A549 (cell line): ENCODE measurements at regions of chr10 and their contacts with region 1.

Region 1: DNA sequence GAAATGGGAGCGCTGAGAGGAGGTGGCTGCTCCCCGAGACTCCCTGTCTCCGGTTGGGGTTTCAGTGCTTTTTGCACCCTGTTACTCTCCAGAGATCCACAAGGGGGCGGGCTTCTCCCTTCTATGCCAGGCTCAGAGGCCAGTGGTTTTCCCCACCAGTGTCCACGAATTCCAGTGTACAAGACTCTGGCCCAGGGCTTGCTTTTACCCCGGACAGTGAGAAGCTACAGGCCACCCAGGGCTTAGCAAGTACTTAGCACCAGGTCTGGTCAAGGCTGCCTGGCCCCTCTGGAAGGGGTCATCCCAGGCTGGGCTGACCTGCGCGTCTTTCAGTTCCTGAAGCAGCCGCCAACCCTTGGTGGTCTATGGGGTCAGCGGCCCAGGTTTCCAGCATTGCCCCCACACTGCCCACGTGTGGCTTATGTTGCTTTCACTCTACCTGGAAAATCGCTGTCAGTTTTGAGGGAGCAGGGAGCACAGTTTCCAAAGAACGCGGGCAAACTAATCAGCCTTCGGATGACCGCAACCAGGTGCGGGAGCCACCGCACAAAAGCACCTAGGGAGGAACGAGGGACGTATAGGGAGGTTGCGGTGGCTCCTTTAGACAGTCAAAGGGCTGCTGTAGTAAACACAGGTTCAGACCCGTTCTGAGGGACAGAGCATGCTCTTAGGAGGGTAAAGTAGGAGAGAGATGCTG is 6.8 kb downstream of the CYP26A1 start:
- DNase-seq: peak; percentile 66 to 87
- ATAC-seq: peak; percentile 81 to 84
- H3K4me3 ChIP-seq: no peak overlapping the region
- H3K27ac ChIP-seq: peak overlapping the region; percentile 51 to 81
- H3K4me1 ChIP-seq: peaks cover 26% of the 10 kb centered on the region; the same call in 2 of the 3 replicates
- CTCF ChIP-seq: peak; percentile 91
- EP300 ChIP-seq: no peak
- POLR2A ChIP-seq: no peak
- RAD21 ChIP-seq: peak; percentile 92 to 93

Region 2: DNA sequence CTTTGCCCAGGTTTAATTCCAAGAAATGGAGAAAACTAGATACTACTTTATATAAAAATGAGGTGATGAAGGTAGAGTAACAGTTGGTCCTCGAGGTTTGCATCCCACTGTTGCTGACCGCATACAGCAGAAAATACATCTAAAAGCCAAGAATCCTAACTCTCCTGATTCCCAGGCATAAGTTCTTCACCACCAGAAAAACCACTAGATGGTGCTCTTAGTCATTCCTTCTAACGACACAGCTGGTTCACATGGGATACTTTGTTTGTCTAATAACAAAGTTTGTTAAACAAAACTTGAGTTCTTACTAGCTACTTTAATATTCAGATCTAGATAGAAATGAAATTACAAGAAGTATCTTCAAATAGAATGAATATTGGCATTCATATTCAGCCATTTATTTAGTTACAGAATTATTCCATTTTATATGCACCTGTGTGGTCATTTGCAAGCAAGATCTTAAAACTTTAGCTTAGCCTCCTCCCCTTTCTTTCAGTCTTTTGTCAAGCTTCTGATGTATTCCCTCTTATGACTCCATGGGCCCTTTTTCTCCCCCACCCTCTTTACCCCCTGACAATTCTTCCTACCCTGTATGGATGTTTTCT is 74.0 kb before region 1 on chr10:
- CTCF ChIA-PET with region 1: interaction called, 85 read pairs
- POLR2A ChIA-PET with region 1: no interaction called
- DNase-seq: peak; percentile 13 to 60
- ATAC-seq: peak; percentile 93 to 95
- H3K4me3 ChIP-seq: no peak overlapping the region
- H3K27ac ChIP-seq: no peak overlapping the region
- H3K4me1 ChIP-seq: peaks cover 19% of the 10 kb centered on the region
- CTCF ChIP-seq: peak; percentile 87
- EP300 ChIP-seq: no peak
- POLR2A ChIP-seq: no peak
- RAD21 ChIP-seq: peak; percentile 82 to 86

Region 3: DNA sequence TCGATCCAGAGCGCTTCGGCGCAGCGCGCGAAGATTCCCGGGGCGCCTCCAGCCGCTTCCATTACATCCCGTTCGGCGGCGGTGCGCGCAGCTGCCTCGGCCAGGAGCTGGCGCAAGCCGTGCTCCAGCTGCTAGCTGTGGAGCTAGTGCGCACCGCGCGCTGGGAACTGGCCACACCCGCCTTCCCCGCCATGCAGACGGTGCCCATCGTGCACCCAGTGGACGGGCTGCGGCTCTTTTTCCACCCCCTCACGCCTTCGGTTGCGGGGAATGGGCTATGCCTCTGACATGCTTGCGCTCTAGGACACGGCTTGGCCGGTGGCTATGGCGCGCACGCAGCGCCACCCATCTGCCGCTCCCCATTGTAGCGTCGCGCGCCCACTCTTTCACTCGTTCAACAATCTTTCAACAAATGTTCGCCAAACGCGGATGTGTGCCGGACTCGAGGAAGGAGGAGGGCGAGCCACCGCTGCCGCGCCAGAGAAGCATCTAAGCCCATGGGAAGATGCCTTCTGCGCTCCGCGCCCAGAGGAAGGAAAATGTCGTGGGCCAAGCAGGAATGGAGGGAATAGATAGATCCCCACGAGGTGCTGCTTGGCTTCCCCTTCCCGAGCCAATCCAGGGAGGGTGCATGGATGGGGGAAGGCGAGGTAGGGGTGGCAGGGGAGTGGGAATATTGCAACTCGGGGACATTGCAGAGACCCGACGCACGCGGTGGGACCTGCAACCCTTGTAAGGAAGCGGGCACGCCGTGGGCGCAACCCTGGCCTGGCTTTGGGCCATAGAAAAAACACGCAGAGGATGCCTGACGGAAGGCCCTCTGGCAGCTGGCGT is 11.9 kb before region 1 on chr10:
- CTCF ChIA-PET with region 1: interaction called, 16 read pairs
- POLR2A ChIA-PET with region 1: no interaction called
- DNase-seq: peak in 1 of 2 experiments; percentile 57
- ATAC-seq: peak; percentile 48 to 60; a peak in 5 of 6 replicates
- H3K4me3 ChIP-seq: peak overlapping the region; percentile 42
- H3K27ac ChIP-seq: peak overlapping the region in 1 of 2 experiments; percentile 37; a peak in 1 of 6 replicates
- H3K4me1 ChIP-seq: 0 out of 3 replicates have a peak, but pooled peaks cover 9% of the 10 kb centered on the region
- CTCF ChIP-seq: peak; percentile 36; the same call in 2 of the 3 replicates
- EP300 ChIP-seq: no peak
- POLR2A ChIP-seq: no peak
- RAD21 ChIP-seq: peak; percentile 39 to 47; a peak in 3 of 5 replicates

Region 4: GRCh38 chr10:93115661-93116383 is 35.3 kb after region 1 on chr10:
- CTCF ChIA-PET with region 1: interaction called, 15 read pairs
- POLR2A ChIA-PET with region 1: no interaction called
- DNase-seq: peak; percentile 39 to 65
- ATAC-seq: peak; percentile 56 to 76; a peak in 3 of 6 replicates
- H3K4me3 ChIP-seq: no peak overlapping the region
- H3K27ac ChIP-seq: 0 out of 6 replicates have a peak overlapping the region, but pooled peaks of 1 of the 2 experiments have one; percentile 29
- H3K4me1 ChIP-seq: no peaks in the 10 kb centered on the region
- CTCF ChIP-seq: no peak
- EP300 ChIP-seq: no peak
- POLR2A ChIP-seq: no peak
- RAD21 ChIP-seq: peak; percentile 39 to 54; a peak in 3 of 5 replicates

Region 5: DNA sequence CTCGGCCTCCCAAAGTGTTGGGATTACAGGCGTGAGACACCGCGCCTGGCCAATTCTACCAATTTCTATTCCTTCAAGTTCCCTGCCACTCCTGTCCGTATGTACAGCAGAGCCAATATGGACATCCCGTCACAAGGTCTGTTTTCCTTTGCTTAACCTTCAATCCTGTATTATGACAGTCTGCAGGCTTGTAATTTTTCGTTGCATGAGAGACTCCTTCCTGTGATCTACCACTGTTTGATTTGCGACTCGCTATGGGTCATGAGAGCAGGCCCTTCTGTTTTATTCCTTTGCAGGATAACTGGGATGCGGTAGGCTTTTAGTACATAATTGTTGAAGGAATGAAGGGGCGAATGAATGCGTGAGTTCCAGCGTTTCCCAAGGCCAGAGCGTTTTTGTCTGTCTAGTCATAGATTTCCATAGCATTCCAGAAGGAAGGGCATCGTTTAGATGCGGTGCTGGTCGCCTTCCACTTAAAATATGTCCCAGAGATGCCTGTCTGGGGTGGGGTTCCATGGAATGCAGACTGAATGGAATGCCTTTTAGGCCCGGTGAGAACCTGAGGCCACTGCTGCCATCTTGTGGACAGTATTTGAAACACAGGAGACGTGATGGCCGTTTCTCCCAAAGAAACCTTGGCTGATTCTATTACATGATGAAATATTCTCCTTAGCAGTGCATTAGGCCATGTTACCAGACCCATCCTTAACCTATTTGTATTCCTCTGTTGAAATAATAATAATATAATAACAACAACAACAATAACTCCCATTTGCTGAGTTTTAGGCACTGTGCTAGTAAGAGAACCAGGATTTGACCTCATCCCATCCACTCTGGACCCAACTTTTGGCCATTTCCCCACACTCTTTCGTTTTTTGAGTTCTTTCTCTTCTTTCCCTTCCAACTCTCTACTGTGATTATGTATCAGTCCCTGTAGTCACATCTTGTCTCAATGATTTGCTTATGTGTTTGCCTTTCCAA is 208.4 kb after region 1 on chr10:
- CTCF ChIA-PET with region 1: interaction called, 88 read pairs
- POLR2A ChIA-PET with region 1: no interaction called
- DNase-seq: peak; percentile 97 to 98
- ATAC-seq: peak; percentile 97
- H3K4me3 ChIP-seq: no peak overlapping the region
- H3K27ac ChIP-seq: peak overlapping the region; percentile 70 to 89
- H3K4me1 ChIP-seq: peaks cover 34% of the 10 kb centered on the region
- CTCF ChIP-seq: peak; percentile 93
- EP300 ChIP-seq: peak in 1 of 2 experiments; percentile 63; a peak in 1 of 5 replicates
- POLR2A ChIP-seq: no peak
- RAD21 ChIP-seq: peak; percentile 96 to 97

Region 6: DNA sequence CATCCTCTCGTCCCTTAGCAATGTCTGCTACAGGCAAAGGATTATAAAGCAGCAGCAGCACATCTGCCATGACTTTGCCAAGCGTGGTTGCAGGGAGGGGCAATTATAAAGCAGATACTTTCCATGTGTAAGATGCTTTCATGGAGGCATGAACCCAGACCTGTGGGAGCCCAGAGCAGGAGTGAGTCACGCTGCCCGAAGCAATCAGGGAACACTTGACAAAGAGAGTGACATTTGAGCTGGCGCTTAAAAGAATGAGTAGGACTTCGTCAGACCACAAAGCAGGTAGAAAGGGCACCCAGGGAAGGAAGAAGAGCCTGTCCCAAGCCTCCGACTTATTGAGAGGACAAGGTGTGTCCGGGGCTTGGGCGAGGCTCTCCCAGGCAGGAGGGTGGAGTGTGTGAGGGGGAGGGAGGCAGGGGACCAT is 254.4 kb after region 1 on chr10:
- CTCF ChIA-PET with region 1: interaction called, 12 read pairs
- POLR2A ChIA-PET with region 1: no interaction called
- DNase-seq: no peak
- ATAC-seq: peak in 1 of 2 experiments; percentile 13; a peak in 3 of 6 replicates
- H3K4me3 ChIP-seq: no peak overlapping the region
- H3K27ac ChIP-seq: no peak overlapping the region
- H3K4me1 ChIP-seq: no peaks in the 10 kb centered on the region
- CTCF ChIP-seq: no peak
- EP300 ChIP-seq: no peak
- POLR2A ChIP-seq: no peak
- RAD21 ChIP-seq: no peak